B cell (primary cell): ENCODE measurements at regions of chr1 and their contacts with region 1.

Region 1: DNA sequence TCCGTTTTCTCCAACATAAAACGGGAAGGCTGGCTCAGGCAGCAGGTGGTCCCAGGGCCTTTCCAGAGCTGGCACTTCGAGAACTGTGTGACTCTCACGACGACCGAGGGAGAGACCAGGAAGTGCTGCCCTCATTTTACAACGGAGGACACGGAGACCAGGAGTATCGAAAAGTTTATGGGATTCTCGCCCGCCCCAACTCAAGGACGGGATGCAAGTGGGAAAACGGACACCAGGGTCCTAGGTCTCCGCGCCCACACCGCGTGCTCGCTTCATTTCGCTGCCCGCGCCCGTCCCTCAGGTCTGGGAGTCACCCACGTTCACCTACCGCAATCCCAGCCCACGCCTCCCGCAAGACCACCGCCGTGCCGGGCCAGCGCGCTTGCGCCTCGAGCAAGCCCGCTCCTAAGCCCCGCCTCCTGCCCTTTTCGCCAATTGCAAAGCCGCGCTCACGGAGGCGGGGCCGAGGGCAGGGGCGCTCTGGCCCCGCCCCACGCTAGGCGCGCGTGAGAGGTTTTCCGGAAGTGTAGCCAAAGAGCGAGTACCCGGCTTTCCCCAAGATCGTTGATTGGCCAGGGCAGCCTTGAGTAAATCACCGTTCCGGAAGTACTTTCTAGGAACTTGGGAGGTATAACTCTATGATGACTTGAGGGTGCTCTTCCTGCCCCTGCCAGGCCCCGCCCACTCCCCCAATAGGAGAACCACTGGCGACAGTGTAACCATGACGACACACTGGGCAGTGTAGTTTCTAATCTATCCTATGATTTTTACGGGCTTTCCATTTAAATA is at the start of gene PARS2:
- DNase-seq: peak; percentile 99
- ATAC-seq: peak; percentile 92
- H3K4me3 ChIP-seq: peak within 1 kb of the TSS; percentile 75 to 96 (median 91)
- H3K4me3 Mint-ChIP-seq: peak within 1 kb of the TSS; percentile 96
- H3K27ac ChIP-seq: peak within 1 kb of the TSS; percentile 47 to 81
- H3K27ac Mint-ChIP-seq: peak within 1 kb of the TSS; percentile 92
- H3K4me1 ChIP-seq: peaks cover 8 to 10% of the 10 kb centered on the region in 2 donors
- H3K4me1 Mint-ChIP-seq: peaks cover 20% of the 10 kb centered on the region
- H3K27me3 ChIP-seq: no peaks in the 10 kb centered on the region
- H3K27me3 Mint-ChIP-seq: no peaks in the 10 kb centered on the region
- CTCF ChIP-seq: no peak
- total RNA-seq, gene PARS2: 4.5 and 4.9 TPM in 2 replicates

Region 2: GRCh38 chr1:54715493-54716298 is 48.6 kb before region 1 on chr1 and contains the start of gene TTC4:
- CTCF ChIA-PET with region 1: no interaction called
- POLR2A ChIA-PET with region 1: no interaction called
- intact Hi-C with region 1: loop called (anchors 1 kb)
- DNase-seq: peak; percentile 91
- ATAC-seq: peak; percentile 99
- H3K4me3 ChIP-seq: peak within 1 kb of the TSS; percentile 81 to 92 (median 91)
- H3K4me3 Mint-ChIP-seq: peak within 1 kb of the TSS; percentile 87
- H3K27ac ChIP-seq: peak within 1 kb of the TSS; percentile 50 to 71
- H3K27ac Mint-ChIP-seq: peak within 1 kb of the TSS; percentile 83
- H3K4me1 ChIP-seq: peaks cover 16 to 17% of the 10 kb centered on the region in 2 donors
- H3K4me1 Mint-ChIP-seq: peaks cover 26% of the 10 kb centered on the region
- H3K27me3 ChIP-seq: no peaks in the 10 kb centered on the region
- H3K27me3 Mint-ChIP-seq: no peaks in the 10 kb centered on the region
- CTCF ChIP-seq: no peak
- total RNA-seq, gene TTC4: 19.9 and 23.9 TPM in 2 replicates

Region 3: GRCh38 chr1:54800899-54801759 is 36.8 kb after region 1 on chr1 and contains the start of gene TTC22:
- CTCF ChIA-PET with region 1: interaction called, 20 read pairs
- POLR2A ChIA-PET with region 1: interaction called, 9 read pairs
- intact Hi-C with region 1: loop called (anchors 1 kb)
- DNase-seq: peak; percentile 81
- ATAC-seq: peak; percentile 92
- H3K4me3 ChIP-seq: peak within 1 kb of the TSS; percentile 50 to 82 (median 75)
- H3K4me3 Mint-ChIP-seq: peak within 1 kb of the TSS; percentile 99
- H3K27ac ChIP-seq: peak within 1 kb of the TSS in 1 of 2 donors; percentile 55
- H3K27ac Mint-ChIP-seq: peak within 1 kb of the TSS; percentile 93
- H3K4me1 ChIP-seq: peaks cover 25 to 31% of the 10 kb centered on the region in 2 donors
- H3K4me1 Mint-ChIP-seq: peaks cover 32% of the 10 kb centered on the region
- H3K27me3 ChIP-seq: no peaks in the 10 kb centered on the region
- H3K27me3 Mint-ChIP-seq: no peaks in the 10 kb centered on the region
- CTCF ChIP-seq: peak; percentile 81
- total RNA-seq, gene TTC22: 10.4 and 10.9 TPM in 2 replicates

Region 4: DNA sequence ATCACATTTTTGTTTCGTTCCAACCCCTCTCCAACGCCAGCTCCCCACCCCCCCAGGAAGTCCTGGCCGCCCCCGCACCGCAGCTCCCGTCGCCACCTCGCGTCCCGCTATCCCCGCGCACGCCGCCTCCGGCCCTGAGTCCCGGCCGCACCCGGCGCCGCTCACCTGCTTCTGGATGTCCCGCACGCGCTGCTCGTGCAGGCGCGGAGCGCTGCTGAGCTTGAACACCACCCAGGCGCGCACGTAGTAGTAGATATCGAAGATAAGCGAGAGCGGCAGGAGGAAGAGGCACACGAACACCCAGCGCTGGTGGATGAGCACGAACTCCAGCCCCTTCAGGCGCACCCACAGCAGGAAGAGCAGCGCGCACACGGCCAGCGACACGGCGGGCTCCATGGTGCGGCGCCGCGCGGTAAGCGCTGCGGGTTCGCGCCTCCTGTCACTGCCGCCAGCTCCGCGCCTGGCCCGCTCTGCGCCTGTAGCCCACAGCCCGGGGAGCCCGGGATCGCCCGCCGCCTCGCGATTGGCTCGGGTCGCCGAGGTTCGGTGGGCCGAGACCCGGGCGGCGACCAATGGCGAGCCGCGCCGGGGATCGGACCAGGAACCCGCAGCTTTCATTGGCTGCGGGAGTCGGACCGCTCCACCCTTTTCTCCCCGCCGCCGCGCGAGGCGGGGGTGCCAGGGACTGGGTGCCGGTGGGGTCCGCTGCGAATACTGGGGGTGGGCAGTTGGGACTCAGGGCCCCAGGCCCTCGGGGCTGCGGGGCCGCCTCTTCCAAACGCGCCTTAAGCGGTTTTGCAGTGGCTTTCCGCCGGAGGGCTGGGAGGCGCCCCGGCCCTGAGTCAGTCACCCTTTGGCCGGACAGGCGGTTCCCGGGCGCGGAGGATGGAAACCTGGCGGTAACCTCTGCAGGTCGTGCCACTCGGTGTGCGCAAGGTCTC is 122.7 kb after region 1 on chr1 and contains the start of gene DHCR24:
- CTCF ChIA-PET with region 1: no interaction called
- POLR2A ChIA-PET with region 1: no interaction called
- intact Hi-C with region 1: loop called (anchors 1 kb)
- DNase-seq: peak; percentile 78
- ATAC-seq: peak; percentile 95
- H3K4me3 ChIP-seq: peak within 1 kb of the TSS in 4 of 5 experiments; percentile 54 to 79 (median 76)
- H3K4me3 Mint-ChIP-seq: peak within 1 kb of the TSS; percentile 96
- H3K27ac ChIP-seq: no peak within 1 kb of the TSS
- H3K27ac Mint-ChIP-seq: peak within 1 kb of the TSS; percentile 83
- H3K4me1 ChIP-seq: peaks cover 11 to 17% of the 10 kb centered on the region in 2 donors
- H3K4me1 Mint-ChIP-seq: peaks cover 30% of the 10 kb centered on the region
- H3K27me3 ChIP-seq: peaks cover 0 to 18% (median 1%) of the 10 kb centered on the region in 4 experiments
- H3K27me3 Mint-ChIP-seq: peaks cover 23% of the 10 kb centered on the region
- CTCF ChIP-seq: no peak
- total RNA-seq, gene DHCR24: 10.5 and 13.3 TPM in 2 replicates